Panc1 (cell line): ENCODE measurements at regions of chr4 and their contacts with region 1.

Region 1: GRCh38 chr4:181528570-181529184 is 714.5 kb upstream of the TENM3 start:
- DNase-seq: peak; percentile 36
- ATAC-seq: peak; percentile 89
- H3K4me3 ChIP-seq: no peak overlapping the region
- H3K27ac ChIP-seq: no peak overlapping the region
- H3K4me1 ChIP-seq: no peaks in the 10 kb centered on the region
- H3K27me3 ChIP-seq: no peaks in the 10 kb centered on the region
- CTCF ChIP-seq: peak; percentile 86

Region 2: GRCh38 chr4:180664766-180665368 is 863.8 kb before region 1 on chr4:
- CTCF ChIA-PET with region 1: no interaction called
- POLR2A ChIA-PET with region 1: no interaction called
- in situ Hi-C with region 1: no loop called
- intact Hi-C with region 1: loop called (anchors 5 kb)
- DNase-seq: peak; percentile 47
- ATAC-seq: peak; percentile 71; the same call in 1 of the 2 replicates
- H3K4me3 ChIP-seq: no peak overlapping the region
- H3K27ac ChIP-seq: no peak overlapping the region
- H3K4me1 ChIP-seq: no peaks in the 10 kb centered on the region
- H3K27me3 ChIP-seq: no peaks in the 10 kb centered on the region
- CTCF ChIP-seq: peak; percentile 67

Region 3: GRCh38 chr4:180828440-180829018 is 700.1 kb before region 1 on chr4:
- CTCF ChIA-PET with region 1: no interaction called
- POLR2A ChIA-PET with region 1: no interaction called
- in situ Hi-C with region 1: no loop called
- intact Hi-C with region 1: loop called (anchors 10 kb)
- DNase-seq: peak; percentile 35
- ATAC-seq: no peak
- H3K4me3 ChIP-seq: no peak overlapping the region
- H3K27ac ChIP-seq: no peak overlapping the region
- H3K4me1 ChIP-seq: no peaks in the 10 kb centered on the region
- H3K27me3 ChIP-seq: no peaks in the 10 kb centered on the region
- CTCF ChIP-seq: peak; percentile 63; the same call in 1 of the 2 replicates

Region 4: GRCh38 chr4:181143250-181143854 is 385.3 kb before region 1 on chr4:
- CTCF ChIA-PET with region 1: interaction called, 4 read pairs
- POLR2A ChIA-PET with region 1: no interaction called
- in situ Hi-C with region 1: no loop called
- intact Hi-C with region 1: loop called (anchors 1 kb)
- DNase-seq: peak; percentile 39
- ATAC-seq: peak; percentile 85; the same call in 1 of the 2 replicates
- H3K4me3 ChIP-seq: no peak overlapping the region
- H3K27ac ChIP-seq: no peak overlapping the region
- H3K4me1 ChIP-seq: no peaks in the 10 kb centered on the region
- H3K27me3 ChIP-seq: no peaks in the 10 kb centered on the region
- CTCF ChIP-seq: peak; percentile 69

Region 5: DNA sequence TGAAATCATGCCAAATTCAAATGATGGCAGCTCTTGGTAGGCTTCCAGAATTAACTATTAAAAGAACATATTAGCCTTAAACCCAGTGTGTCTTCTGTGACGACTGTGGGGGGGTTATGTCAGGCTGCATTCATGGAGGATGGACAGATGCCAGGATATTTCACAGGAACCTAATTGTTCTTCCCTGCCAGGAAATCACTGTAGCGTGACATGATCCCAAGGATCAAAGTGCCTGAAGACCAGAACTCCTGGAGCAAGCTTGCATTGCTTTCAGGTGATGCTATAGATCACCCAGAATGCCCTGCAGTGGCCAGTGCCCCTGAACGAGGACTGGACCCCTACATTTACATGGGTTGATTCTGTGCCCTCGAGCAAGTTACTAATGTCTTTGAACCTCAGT is 378.5 kb before region 1 on chr4:
- CTCF ChIA-PET with region 1: interaction called, 13 read pairs
- POLR2A ChIA-PET with region 1: no interaction called
- in situ Hi-C with region 1: no loop called
- intact Hi-C with region 1: no loop called
- DNase-seq: no peak
- ATAC-seq: no peak
- H3K4me3 ChIP-seq: no peak overlapping the region
- H3K27ac ChIP-seq: no peak overlapping the region
- H3K4me1 ChIP-seq: no peaks in the 10 kb centered on the region
- H3K27me3 ChIP-seq: no peaks in the 10 kb centered on the region
- CTCF ChIP-seq: no peak

Region 6: DNA sequence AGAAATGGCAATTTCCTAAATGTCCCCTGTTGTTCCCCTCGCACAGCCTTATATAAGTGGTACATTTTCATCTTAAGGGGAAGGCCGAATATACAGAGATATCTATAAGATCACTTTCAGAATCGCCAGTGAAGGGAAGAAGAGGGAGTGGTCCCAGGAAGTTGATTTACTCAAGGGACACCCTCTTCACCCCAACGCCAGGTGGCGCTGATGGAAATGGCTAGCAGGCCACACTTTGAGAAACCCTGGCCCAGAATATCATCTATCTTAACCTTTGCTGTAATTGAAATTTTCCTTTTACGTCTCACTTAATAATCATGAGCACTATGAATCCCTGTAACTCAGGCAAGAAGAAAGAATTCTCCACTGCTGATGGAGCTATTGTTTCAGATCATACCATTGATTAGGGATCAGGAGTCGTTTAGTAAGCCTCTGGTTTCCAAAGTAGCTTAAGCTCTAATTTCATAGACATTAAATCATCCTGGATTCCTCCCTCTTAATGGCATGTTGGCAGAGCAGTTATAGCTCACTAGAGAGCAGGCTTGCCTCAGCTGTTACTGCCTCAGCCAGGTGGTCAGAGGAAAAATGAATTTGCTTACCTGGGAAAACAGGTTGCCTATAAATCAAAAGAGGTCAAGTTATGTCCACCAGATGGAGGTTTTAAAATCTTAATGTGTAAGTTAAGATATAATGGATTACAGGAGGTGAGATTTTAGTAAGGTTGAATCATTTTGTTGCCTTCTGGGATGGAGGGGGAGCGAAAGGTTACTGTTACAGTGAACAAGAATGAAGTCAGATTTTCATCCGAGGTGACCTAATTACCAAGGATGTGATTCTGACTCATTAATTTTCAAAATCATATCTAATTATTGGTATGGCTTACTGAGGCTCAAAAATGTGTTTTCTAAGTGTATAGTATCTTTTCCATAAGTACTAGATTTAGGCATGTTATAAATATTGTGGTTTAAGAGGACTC is 226.7 kb before region 1 on chr4:
- CTCF ChIA-PET with region 1: no interaction called
- POLR2A ChIA-PET with region 1: no interaction called
- in situ Hi-C with region 1: no loop called
- intact Hi-C with region 1: loop called (anchors 2 kb)
- DNase-seq: peak; percentile 10
- ATAC-seq: no peak; the same call in 1 of the 2 replicates
- H3K4me3 ChIP-seq: no peak overlapping the region
- H3K27ac ChIP-seq: no peak overlapping the region
- H3K4me1 ChIP-seq: no peaks in the 10 kb centered on the region
- H3K27me3 ChIP-seq: no peaks in the 10 kb centered on the region
- CTCF ChIP-seq: peak; percentile 58

Region 7: DNA sequence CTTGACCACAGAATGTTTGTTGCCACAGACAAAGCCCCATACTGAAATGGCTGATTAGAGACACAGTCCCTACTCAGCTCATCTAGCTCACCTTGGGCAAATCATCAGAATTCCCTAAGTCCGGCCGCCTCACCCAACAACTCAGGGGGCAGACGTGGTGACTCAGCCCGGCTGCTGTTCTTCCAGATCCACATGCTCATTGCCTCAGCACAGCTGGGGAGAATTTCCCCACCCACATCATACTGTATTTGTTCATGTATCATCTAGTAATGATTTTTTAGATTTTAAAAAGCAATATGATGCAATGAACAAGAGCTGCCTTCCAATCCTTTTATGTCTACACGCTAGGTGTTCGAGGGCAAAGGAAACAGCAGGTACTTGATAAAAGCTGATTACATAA is 380.7 kb after region 1 on chr4:
- CTCF ChIA-PET with region 1: no interaction called
- POLR2A ChIA-PET with region 1: no interaction called
- in situ Hi-C with region 1: no loop called
- intact Hi-C with region 1: no loop called
- DNase-seq: no peak
- ATAC-seq: no peak
- H3K4me3 ChIP-seq: no peak overlapping the region
- H3K27ac ChIP-seq: no peak overlapping the region
- H3K4me1 ChIP-seq: no peaks in the 10 kb centered on the region
- H3K27me3 ChIP-seq: no peaks in the 10 kb centered on the region
- CTCF ChIP-seq: no peak